ENCODE measurements at regions of chr12 and their contacts with region 1.

Region 1: GRCh38 chr12:47779301-47779942 is 6.4 kb downstream of the SLC48A1 start:
- DNase-seq: peak; percentile 85 to 89
- H3K4me3 ChIP-seq: no peak overlapping the region
- H3K27ac ChIP-seq: peak overlapping the region in 2 of 3 donors; percentile 28 to 91
- H3K4me1 ChIP-seq: peaks cover 47 to 58% of the 10 kb centered on the region in 2 donors
- H3K27me3 ChIP-seq: no peaks in the 10 kb centered on the region
- CTCF ChIP-seq: peak; percentile 77 to 96 (median 94)
- POLR2A ChIP-seq: no peak

Region 2: DNA sequence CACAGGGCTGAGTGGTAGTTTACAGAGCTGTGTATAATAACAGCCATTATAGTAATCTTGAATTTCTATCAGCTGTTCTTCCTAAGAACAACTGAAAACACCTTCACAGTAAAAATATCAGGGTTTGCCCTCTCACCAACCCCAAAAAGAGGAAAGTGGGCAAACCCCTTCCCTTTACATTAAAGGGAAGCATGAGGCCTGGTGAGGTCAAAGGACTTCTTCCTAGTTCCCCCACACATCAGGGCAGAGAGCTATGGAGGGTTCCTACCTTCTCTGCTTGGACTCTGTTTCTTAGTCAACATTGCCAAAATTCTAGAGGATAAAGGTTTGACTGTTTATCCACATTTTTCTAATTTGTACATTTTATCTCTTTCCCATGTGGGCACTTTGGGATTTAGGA is 69.1 kb before region 1 on chr12:
- intact Hi-C with region 1: no loop called
- DNase-seq: no peak
- H3K4me3 ChIP-seq: no peak overlapping the region
- H3K27ac ChIP-seq: no peak overlapping the region
- H3K4me1 ChIP-seq: peaks cover under 1 to 7% of the 10 kb centered on the region in 2 donors
- H3K27me3 ChIP-seq: no peaks in the 10 kb centered on the region
- CTCF ChIP-seq: no peak
- POLR2A ChIP-seq: no peak

Region 3: DNA sequence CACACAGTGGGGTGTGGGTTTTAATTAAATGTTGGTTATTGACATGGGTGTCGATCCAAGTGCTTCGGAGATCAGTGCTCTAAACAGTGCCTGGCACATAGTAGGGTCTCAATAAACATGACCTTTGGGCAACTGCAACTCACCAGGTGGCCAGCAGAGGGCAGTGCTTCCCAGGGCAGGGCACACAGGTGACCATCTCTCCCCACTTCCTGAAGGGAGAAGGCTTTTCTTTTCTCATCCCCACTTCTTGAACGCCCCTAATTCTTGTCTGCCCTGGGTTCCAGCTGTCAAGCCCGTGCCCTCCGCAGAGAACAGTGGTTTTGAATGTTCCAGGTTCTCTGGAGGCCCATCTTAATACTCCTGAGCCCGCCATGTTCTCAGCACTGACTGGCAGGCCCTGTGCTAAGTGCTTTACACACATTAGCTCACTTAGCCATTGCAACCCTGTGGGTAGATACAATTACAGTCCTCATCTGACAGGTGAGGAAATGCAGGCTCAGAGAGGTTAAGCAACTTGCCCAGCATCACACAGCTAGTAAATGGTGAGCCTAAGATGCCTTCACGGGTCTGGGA is 37.1 kb before region 1 on chr12:
- intact Hi-C with region 1: loop called (anchors 5 kb)
- DNase-seq: peak; percentile 47 to 65
- H3K4me3 ChIP-seq: no peak overlapping the region
- H3K27ac ChIP-seq: peak overlapping the region in 1 of 3 donors; percentile 43
- H3K4me1 ChIP-seq: peaks cover 41 to 72% of the 10 kb centered on the region in 2 donors
- H3K27me3 ChIP-seq: no peaks in the 10 kb centered on the region
- CTCF ChIP-seq: peak; percentile 90 to 98 (median 94)
- POLR2A ChIP-seq: no peak

Region 4: GRCh38 chr12:47837190-47838171 is 58.1 kb after region 1 on chr12:
- intact Hi-C with region 1: loop called (anchors 10 kb)
- DNase-seq: peak; percentile 71 to 83
- H3K4me3 ChIP-seq: no peak overlapping the region
- H3K27ac ChIP-seq: no peak overlapping the region
- H3K4me1 ChIP-seq: peaks cover 9 to 17% of the 10 kb centered on the region in 2 donors
- H3K27me3 ChIP-seq: no peaks in the 10 kb centered on the region
- CTCF ChIP-seq: peak; percentile 85 to 95 (median 89)
- POLR2A ChIP-seq: no peak